HEK293T (cell line): ENCODE measurements at regions of chr12 and their contacts with region 1.

Region 1: GRCh38 chr12:68610370-68611093 is at the start of gene RAP1B:
- DNase-seq: peak; percentile 94

Region 2: DNA sequence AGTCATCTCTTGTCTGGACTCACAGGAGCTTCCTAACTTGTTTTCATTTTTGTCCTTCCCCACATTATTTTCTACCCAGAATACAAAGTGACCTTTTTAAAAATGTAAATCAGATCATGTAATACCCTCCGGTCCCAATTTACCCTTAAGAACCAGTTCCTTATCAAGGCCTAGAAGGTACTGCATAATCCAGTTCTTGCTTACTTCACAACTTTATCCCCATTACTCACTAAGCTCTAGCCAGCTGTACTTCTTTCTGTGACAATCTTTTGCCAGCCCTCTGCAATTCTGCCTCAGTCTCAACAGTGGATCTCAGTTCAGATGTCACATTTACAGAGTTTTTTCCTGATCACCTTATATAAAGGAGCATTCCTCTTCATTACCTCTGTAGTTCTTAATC is 11.7 kb after region 1 on chr12:
- CTCF ChIA-PET with region 1: no interaction called
- POLR2A ChIA-PET with region 1: interaction called, 10 read pairs
- DNase-seq: no peak

Region 3: DNA sequence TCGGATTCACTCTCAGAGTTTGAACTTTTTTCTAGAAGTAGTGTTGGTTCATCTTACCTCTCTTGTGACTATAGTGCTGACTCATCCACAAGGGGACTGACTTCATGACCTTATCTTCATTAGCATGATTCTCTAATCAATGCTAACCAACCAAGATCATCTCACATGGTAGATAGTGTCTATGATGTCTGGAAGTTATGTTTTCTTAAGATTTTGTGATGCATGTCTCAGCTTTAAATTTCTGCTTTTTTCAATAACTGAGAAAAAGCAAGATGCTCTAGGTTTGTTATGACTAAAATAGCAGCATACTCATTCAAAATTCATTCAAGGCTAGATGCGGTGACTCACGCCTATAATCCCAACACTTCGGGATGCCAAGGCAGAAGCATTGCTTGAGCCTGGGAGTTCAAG is 123.1 kb after region 1 on chr12:
- CTCF ChIA-PET with region 1: no interaction called
- POLR2A ChIA-PET with region 1: no interaction called
- DNase-seq: no peak

Region 4: DNA sequence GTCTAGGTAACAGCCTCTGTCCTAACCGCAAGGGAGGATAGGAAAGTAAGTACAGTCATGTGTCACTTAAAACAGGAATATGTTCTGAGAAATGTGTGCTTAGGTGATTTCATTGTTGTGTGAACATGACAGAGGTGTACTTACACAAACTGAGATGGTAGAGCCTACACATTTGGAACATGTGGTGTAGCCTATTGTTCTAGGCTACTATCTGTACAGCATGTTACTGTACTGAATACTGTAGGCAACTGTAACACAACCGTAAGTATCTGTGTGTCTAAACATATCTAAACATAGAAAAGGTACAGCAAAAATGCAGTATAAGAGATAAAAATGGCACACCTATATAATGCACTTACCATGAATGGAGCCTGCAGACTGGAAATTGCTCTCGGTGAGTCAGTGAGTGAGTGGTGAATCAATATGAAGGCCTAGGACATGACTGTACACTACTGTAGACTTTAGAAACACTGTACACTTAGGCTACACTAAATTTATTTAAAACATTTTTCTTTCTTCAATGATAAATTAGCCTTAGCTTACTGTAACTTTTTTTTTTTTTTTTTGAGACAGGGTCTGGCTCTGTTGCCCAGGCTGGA is 184.2 kb after region 1 on chr12:
- CTCF ChIA-PET with region 1: no interaction called
- POLR2A ChIA-PET with region 1: no interaction called
- DNase-seq: no peak